ENCODE measurements at regions of chr5 and their contacts with region 1.

Region 1: GRCh38 chr5:96752341-96753016 is 55.3 kb downstream of the ERAP1 start:
- DNase-seq: peak; percentile 44
- ATAC-seq: no peak
- H3K4me3 Mint-ChIP-seq: no peak overlapping the region
- H3K27ac Mint-ChIP-seq: no peak overlapping the region
- H3K4me1 Mint-ChIP-seq: peaks cover 13% of the 10 kb centered on the region
- H3K27me3 Mint-ChIP-seq: no peaks in the 10 kb centered on the region
- CTCF ChIP-seq: peak; percentile 88

Region 2: DNA sequence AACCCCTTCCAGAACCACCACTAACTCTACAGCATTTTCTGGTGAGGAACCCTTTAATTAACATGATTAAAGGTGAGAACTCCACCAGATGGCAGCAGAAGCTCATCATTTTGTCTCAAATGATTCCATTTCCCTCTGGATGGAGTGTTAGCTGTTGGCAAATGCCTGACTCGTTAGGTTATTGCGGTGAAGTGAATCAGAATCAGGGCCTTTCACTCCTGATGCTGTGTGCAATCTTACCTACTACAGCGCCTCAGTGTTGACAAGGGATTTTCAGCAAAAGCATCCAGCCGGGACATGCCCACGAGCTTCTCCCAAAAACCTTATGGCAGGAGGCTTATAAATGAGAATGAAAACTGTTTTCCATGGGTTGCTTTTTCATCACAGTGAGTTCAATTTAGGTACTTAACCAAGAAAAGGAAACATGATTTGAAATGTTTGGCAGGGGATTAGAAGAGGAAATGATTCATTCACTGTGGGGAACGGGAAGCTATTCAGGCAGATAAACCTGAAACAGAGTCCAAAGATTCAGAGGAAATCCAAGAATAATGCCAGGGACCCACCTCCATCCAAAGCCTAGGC is 138.3 kb before region 1 on chr5:
- CTCF ChIA-PET with region 1: interaction called, 11 read pairs
- POLR2A ChIA-PET with region 1: no interaction called
- intact Hi-C with region 1: loop called (anchors 10 kb)
- DNase-seq: peak; percentile 59
- ATAC-seq: peak; percentile 51
- H3K4me3 Mint-ChIP-seq: no peak overlapping the region
- H3K27ac Mint-ChIP-seq: no peak overlapping the region
- H3K4me1 Mint-ChIP-seq: peaks cover 4% of the 10 kb centered on the region
- H3K27me3 Mint-ChIP-seq: peaks cover 11% of the 10 kb centered on the region
- CTCF ChIP-seq: peak; percentile 80

Region 3: DNA sequence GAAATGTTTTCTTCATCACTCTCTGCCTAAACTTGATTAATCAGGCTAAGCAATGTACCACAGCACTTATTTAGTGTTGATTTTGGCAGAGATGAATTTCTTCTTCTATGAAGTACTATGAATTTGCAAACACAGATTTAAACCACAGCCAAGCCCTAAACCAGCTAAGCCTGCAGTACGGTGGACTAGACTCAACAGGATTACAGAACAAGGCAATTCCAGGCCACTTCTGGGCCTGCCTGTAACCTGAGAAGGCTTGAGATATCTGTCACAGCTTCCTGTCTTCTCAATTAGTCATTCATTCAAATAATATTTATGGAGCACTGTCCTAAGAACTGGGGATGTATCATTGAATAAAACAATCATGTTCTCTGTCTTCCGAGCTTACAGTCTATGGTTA is 122.7 kb before region 1 on chr5:
- CTCF ChIA-PET with region 1: no interaction called
- POLR2A ChIA-PET with region 1: no interaction called
- intact Hi-C with region 1: no loop called
- DNase-seq: no peak
- ATAC-seq: no peak
- H3K4me3 Mint-ChIP-seq: no peak overlapping the region
- H3K27ac Mint-ChIP-seq: no peak overlapping the region
- H3K4me1 Mint-ChIP-seq: peaks cover 5% of the 10 kb centered on the region
- H3K27me3 Mint-ChIP-seq: peaks cover 3% of the 10 kb centered on the region
- CTCF ChIP-seq: no peak

Region 4: DNA sequence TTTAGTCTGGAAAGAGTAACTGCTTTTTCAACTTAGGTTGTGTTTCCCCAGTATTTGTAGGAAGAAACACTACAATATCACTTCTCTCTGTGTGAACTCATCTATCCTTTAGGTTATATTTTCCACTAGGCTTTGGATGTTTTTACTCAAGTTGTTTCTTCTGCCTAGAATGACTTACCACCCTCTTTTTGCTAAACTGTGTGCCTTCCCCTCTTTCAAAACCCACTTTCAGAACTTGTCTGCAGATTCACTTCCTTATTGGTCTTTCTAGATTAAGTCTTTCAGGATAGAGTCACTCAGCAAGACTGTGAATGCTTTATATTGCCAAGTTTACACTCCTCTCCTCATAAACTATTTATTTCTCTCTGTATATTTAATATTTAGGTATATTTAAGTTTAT is 104.5 kb before region 1 on chr5:
- CTCF ChIA-PET with region 1: no interaction called
- POLR2A ChIA-PET with region 1: no interaction called
- intact Hi-C with region 1: no loop called
- DNase-seq: no peak
- ATAC-seq: no peak
- H3K4me3 Mint-ChIP-seq: no peak overlapping the region
- H3K27ac Mint-ChIP-seq: no peak overlapping the region
- H3K4me1 Mint-ChIP-seq: peaks cover 4% of the 10 kb centered on the region
- H3K27me3 Mint-ChIP-seq: peaks cover 7% of the 10 kb centered on the region
- CTCF ChIP-seq: no peak

Region 5: DNA sequence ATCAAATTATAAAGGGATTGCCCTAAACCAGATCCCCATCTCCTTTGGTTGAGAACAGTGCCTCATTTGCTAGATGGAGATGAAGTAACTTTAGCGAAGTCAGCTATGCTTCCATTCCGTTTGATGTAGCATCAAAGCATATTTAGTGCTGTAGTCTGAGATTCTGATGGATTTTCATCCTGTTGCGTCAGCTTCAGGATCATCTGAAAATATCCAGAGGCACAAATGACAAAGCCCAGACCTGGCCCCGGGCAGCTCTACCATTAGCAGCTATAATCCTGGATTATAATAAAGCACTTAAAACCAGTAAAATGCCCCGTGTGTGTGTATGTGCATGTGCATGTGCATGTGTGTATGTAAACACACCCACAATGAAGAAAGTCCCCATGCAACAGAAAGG is 10.5 kb after region 1 on chr5:
- CTCF ChIA-PET with region 1: interaction called, 33 read pairs
- POLR2A ChIA-PET with region 1: interaction called, 3 read pairs
- intact Hi-C with region 1: no loop called
- DNase-seq: no peak
- ATAC-seq: no peak
- H3K4me3 Mint-ChIP-seq: no peak overlapping the region
- H3K27ac Mint-ChIP-seq: peak overlapping the region; percentile 2
- H3K4me1 Mint-ChIP-seq: peaks cover 2% of the 10 kb centered on the region
- H3K27me3 Mint-ChIP-seq: no peaks in the 10 kb centered on the region
- CTCF ChIP-seq: no peak

Region 6: DNA sequence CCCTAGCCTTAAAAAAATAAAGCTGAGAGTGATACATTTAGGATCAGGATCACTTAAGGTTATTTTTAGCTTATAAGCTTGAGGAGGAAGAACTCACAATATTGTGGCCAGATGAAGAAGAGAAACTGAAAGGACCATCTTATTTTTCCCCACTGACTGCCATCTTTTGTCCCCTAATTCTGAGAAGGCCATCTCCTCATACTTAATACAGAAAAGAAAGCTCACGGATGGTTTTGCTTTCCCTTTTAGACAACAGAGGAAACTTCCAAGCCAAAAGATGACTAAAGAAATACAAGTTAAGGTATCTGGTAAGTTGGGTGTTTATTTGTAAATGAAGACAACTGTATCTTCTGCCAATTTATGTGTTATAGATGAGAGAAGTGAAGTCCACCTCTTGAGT is 18.9 kb after region 1 on chr5:
- CTCF ChIA-PET with region 1: interaction called, 23 read pairs
- POLR2A ChIA-PET with region 1: interaction called, 3 read pairs
- intact Hi-C with region 1: no loop called
- DNase-seq: no peak
- ATAC-seq: peak; percentile 81
- H3K4me3 Mint-ChIP-seq: no peak overlapping the region
- H3K27ac Mint-ChIP-seq: peak overlapping the region; percentile 72
- H3K4me1 Mint-ChIP-seq: peaks cover 16% of the 10 kb centered on the region
- H3K27me3 Mint-ChIP-seq: no peaks in the 10 kb centered on the region
- CTCF ChIP-seq: no peak

Region 7: DNA sequence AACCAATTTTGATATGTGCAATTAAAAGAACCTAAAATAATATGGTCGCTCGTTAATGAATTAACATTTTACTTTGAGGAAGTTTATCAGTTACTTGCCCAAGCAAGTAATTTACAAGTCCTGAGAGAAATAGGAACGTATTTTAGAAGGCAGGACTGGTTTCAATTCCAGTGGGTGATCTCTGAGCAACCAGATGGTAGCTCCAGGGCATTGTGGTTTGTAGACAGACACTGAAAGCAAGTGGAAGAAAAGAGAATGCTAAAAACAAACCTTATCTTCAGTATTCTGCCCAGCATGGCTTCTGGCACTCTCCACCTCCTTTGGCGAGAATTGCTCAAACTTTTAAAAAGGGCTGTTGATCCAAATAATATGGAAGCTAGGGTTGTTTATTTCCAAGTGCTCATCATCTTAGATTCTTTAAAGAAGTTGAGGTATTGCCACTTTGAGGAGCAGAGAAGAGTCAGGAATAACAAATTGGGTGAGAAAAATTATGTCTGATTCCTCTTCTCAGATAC is 92.1 kb after region 1 on chr5:
- CTCF ChIA-PET with region 1: no interaction called
- POLR2A ChIA-PET with region 1: no interaction called
- intact Hi-C with region 1: no loop called
- DNase-seq: no peak
- ATAC-seq: no peak
- H3K4me3 Mint-ChIP-seq: no peak overlapping the region
- H3K27ac Mint-ChIP-seq: no peak overlapping the region
- H3K4me1 Mint-ChIP-seq: peaks cover 13% of the 10 kb centered on the region
- H3K27me3 Mint-ChIP-seq: peaks cover 4% of the 10 kb centered on the region
- CTCF ChIP-seq: no peak

Region 8: GRCh38 chr5:96876292-96876850 is 123.9 kb after region 1 on chr5 and contains the start of gene ERAP2:
- CTCF ChIA-PET with region 1: interaction called, 10 read pairs
- POLR2A ChIA-PET with region 1: interaction called, 3 read pairs
- intact Hi-C with region 1: no loop called
- DNase-seq: peak; percentile 28
- ATAC-seq: peak; percentile 70
- H3K4me3 Mint-ChIP-seq: peak within 1 kb of the TSS; percentile 89
- H3K27ac Mint-ChIP-seq: peak within 1 kb of the TSS; percentile 97
- H3K4me1 Mint-ChIP-seq: peaks cover 60% of the 10 kb centered on the region
- H3K27me3 Mint-ChIP-seq: no peaks in the 10 kb centered on the region
- CTCF ChIP-seq: no peak
- total RNA-seq, gene ERAP2: 43.0 to 44.5 TPM

Region 9: DNA sequence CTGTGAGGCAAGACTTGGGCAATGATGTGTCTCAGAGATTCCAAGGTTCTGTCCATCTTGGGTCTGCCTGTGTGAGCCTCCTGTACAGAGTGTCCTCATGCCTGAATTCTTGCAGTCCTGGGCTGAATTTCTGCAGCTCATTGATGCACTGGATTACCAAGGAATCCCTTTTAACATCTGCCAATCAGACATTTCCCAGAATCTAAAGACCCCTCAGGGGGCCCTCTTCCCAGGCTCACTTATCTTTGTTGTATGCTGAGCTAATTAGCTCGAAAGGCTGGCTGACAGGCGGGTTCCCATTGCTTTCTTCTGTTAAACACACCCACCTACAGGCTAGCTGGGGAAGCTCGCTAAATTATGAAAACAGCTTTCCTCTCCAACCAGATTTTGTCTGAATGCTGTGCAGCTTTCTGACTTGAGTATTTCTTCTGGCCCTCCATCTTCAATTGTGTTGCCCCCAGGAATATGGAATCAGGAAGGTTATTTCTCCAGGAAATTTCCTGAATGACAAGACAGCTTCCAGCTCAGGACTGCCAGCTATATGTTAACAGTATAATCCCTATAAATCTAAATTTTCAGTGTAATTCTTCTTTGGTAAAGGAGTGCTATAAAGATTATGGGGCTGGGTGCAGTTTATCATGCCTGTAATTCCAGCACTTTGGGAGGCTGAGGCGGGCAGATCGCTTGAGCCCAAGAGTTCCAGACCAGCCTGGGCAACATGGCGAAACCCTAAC is 390.2 kb after region 1 on chr5 and contains the start of gene LIX1:
- CTCF ChIA-PET with region 1: interaction called, 14 read pairs
- POLR2A ChIA-PET with region 1: no interaction called
- intact Hi-C with region 1: no loop called
- DNase-seq: peak; percentile 57
- ATAC-seq: peak; percentile 86
- H3K4me3 Mint-ChIP-seq: no peak within 1 kb of the TSS
- H3K27ac Mint-ChIP-seq: no peak within 1 kb of the TSS
- H3K4me1 Mint-ChIP-seq: no peaks in the 10 kb centered on the region
- H3K27me3 Mint-ChIP-seq: peaks cover 8% of the 10 kb centered on the region
- CTCF ChIP-seq: peak; percentile 63
- total RNA-seq, gene LIX1: not detected